ENCODE measurements at regions of chr4 and their contacts with region 1.

Region 1: GRCh38 chr4:123767806-123768205 is 371.2 kb downstream of the SPRY1 start:
- DNase-seq: no peak
- H3K4me3 Mint-ChIP-seq: no peak overlapping the region
- H3K27ac Mint-ChIP-seq: no peak overlapping the region
- H3K4me1 Mint-ChIP-seq: peaks cover 2% of the 10 kb centered on the region
- H3K27me3 Mint-ChIP-seq: no peaks in the 10 kb centered on the region
- CTCF ChIP-seq: no peak

Region 2: GRCh38 chr4:123102897-123103471 is 664.8 kb before region 1 on chr4:
- CTCF ChIA-PET with region 1: interaction called, 7 read pairs
- POLR2A ChIA-PET with region 1: no interaction called
- intact Hi-C with region 1: loop called (anchors 5 kb)
- DNase-seq: peak; percentile 49
- H3K4me3 Mint-ChIP-seq: no peak overlapping the region
- H3K27ac Mint-ChIP-seq: peak overlapping the region; percentile 29
- H3K4me1 Mint-ChIP-seq: peaks cover 5% of the 10 kb centered on the region
- H3K27me3 Mint-ChIP-seq: no peaks in the 10 kb centered on the region
- CTCF ChIP-seq: peak; percentile 58

Region 3: DNA sequence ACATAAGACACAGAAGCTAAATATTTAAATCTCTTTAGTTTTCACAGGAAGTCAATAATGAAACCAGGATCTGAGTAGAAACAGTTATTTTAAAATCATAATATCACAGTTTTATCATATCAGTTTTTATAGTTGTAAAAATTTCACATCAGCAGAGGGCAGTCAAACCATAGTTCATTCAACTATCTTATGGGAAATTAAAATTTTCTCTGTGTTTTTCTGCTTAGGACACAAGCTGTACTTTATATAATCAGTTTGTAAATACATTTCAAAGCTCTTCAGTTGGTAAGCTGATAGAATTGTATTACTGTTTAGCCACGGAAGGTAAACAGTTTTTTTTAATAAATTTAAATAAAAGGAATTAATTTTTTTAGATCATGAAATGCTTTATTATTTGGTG is 640.6 kb before region 1 on chr4:
- CTCF ChIA-PET with region 1: interaction called, 3 read pairs
- POLR2A ChIA-PET with region 1: no interaction called
- intact Hi-C with region 1: loop called (anchors 5 kb)
- DNase-seq: peak; percentile 16
- H3K4me3 Mint-ChIP-seq: no peak overlapping the region
- H3K27ac Mint-ChIP-seq: no peak overlapping the region
- H3K4me1 Mint-ChIP-seq: no peaks in the 10 kb centered on the region
- H3K27me3 Mint-ChIP-seq: no peaks in the 10 kb centered on the region
- CTCF ChIP-seq: peak; percentile 42

Region 4: GRCh38 chr4:123755655-123756054 is 12.2 kb before region 1 on chr4:
- CTCF ChIA-PET with region 1: interaction called, 19 read pairs
- POLR2A ChIA-PET with region 1: no interaction called
- intact Hi-C with region 1: no loop called
- DNase-seq: no peak
- H3K4me3 Mint-ChIP-seq: no peak overlapping the region
- H3K27ac Mint-ChIP-seq: no peak overlapping the region
- H3K4me1 Mint-ChIP-seq: no peaks in the 10 kb centered on the region
- H3K27me3 Mint-ChIP-seq: no peaks in the 10 kb centered on the region
- CTCF ChIP-seq: no peak

Region 5: DNA sequence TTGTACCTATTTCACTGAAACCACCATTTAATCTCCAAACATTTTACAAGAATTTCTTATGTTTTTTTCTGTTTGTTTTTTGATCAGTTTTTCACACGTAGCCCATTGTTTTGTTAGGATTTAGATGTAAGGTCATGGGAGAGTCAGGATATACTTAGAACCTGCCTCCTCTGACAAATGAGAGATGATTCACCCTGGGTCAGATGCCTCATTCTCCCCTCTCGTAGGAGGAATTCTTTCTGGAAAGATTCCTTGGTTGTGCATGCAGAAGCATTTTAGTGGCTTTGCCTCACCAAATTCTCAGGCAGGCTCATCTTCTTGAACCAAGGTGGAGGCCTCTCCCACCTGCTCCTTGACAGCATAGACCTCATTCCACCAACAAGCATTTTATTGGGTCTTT is 228.1 kb after region 1 on chr4:
- CTCF ChIA-PET with region 1: interaction called, 15 read pairs
- POLR2A ChIA-PET with region 1: no interaction called
- intact Hi-C with region 1: loop called (anchors 10 kb)
- DNase-seq: peak; percentile 49
- H3K4me3 Mint-ChIP-seq: no peak overlapping the region
- H3K27ac Mint-ChIP-seq: no peak overlapping the region
- H3K4me1 Mint-ChIP-seq: peaks cover 8% of the 10 kb centered on the region
- H3K27me3 Mint-ChIP-seq: no peaks in the 10 kb centered on the region
- CTCF ChIP-seq: no peak

Region 6: GRCh38 chr4:124035364-124036041 is 267.7 kb after region 1 on chr4:
- CTCF ChIA-PET with region 1: no interaction called
- POLR2A ChIA-PET with region 1: no interaction called
- intact Hi-C with region 1: no loop called
- DNase-seq: no peak
- H3K4me3 Mint-ChIP-seq: no peak overlapping the region
- H3K27ac Mint-ChIP-seq: no peak overlapping the region
- H3K4me1 Mint-ChIP-seq: no peaks in the 10 kb centered on the region
- H3K27me3 Mint-ChIP-seq: no peaks in the 10 kb centered on the region
- CTCF ChIP-seq: no peak

Region 7: DNA sequence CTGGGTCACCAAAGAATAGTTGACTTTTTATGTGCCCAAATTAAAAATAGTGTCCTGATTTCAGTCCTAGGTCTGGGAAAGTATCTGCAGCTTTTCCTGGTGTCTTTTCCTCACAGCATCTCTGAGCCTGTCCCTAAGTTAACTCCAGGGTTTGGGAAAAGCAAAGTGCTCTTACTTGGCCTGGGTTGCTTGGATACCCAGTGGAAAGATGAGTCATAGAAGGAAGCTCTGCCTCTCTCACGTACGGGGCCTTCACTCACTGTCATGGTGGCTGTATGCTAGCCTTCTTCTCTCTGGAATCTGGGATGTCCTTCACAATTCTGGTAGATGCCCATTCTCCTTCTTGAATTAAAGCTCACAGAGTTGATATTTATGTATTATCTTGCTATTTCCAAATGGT is 337.4 kb after region 1 on chr4:
- CTCF ChIA-PET with region 1: interaction called, 39 read pairs
- POLR2A ChIA-PET with region 1: no interaction called
- intact Hi-C with region 1: no loop called
- DNase-seq: peak; percentile 26
- H3K4me3 Mint-ChIP-seq: no peak overlapping the region
- H3K27ac Mint-ChIP-seq: no peak overlapping the region
- H3K4me1 Mint-ChIP-seq: peaks cover 6% of the 10 kb centered on the region
- H3K27me3 Mint-ChIP-seq: no peaks in the 10 kb centered on the region
- CTCF ChIP-seq: no peak

Region 8: DNA sequence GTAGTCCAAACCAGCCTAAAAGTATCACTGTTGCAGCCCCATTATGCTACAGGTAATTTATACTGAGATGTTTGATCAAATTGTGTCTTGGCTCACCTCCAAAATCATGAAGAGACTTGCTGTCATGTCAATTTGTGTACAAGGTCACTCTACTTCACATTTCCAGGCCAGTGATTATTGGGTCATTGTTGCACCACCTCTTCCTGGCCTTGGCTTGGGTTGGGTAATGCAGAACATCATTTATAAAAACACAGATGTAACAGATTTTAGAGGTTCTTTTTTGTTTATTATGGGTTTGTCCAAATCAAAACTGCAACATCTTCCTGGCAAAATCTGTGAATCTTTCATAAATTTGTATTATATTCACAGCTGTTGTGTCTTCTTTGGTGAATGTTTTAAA is 485.3 kb after region 1 on chr4:
- CTCF ChIA-PET with region 1: interaction called, 3 read pairs
- POLR2A ChIA-PET with region 1: no interaction called
- intact Hi-C with region 1: loop called (anchors 1 kb)
- DNase-seq: no peak
- H3K4me3 Mint-ChIP-seq: no peak overlapping the region
- H3K27ac Mint-ChIP-seq: no peak overlapping the region
- H3K4me1 Mint-ChIP-seq: no peaks in the 10 kb centered on the region
- H3K27me3 Mint-ChIP-seq: no peaks in the 10 kb centered on the region
- CTCF ChIP-seq: no peak

Region 9: DNA sequence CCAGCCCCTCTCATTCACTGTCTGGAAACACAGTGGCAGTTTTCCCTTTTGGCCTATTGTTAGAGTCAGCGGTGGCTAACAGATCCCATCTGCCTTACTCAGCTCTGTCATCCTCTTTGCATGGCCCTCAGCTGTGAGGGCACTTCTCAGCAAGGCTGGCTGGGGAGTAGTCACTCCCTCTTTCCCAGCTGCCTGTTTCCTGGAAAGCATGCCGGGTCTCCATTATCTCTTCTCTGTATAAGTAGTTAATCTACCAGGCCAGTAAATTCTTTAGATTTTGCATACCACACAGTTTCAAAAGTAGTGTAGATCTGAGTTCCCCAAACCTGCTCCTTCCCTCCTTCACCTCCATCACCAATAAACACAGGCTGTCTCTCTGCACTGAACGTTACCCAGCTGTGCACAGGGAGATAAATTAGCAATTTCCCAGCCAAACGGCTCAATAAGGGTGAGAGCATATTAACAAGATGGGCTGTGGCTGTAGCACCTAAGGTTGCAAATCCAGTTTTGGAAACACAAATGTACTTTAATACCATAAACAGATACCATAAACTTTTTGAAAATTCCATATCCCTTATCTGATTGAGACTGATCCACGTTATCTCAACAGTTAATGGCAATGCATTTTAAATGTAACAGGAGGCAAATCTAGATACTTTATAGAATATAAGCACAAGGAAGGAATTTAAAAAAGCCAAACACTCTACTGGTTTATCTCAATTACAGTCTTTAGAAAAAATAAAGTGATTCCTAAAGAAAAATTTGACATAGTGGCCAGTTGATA is 715.5 kb after region 1 on chr4:
- CTCF ChIA-PET with region 1: no interaction called
- POLR2A ChIA-PET with region 1: no interaction called
- intact Hi-C with region 1: no loop called
- DNase-seq: no peak
- H3K4me3 Mint-ChIP-seq: no peak overlapping the region
- H3K27ac Mint-ChIP-seq: no peak overlapping the region
- H3K4me1 Mint-ChIP-seq: no peaks in the 10 kb centered on the region
- H3K27me3 Mint-ChIP-seq: no peaks in the 10 kb centered on the region
- CTCF ChIP-seq: no peak